Activated naive CD4-positive, alpha-beta T cell treated with anti-CD3 and anti-CD28 coated beads for 36 hours (primary cell): ENCODE measurements at regions of chr18 and their contacts with region 1.

Region 1: GRCh38 chr18:63016270-63016669 is 300.9 kb downstream of the PHLPP1 start:
- DNase-seq: peak; percentile 68
- H3K4me3 Mint-ChIP-seq: no peak overlapping the region
- H3K27ac Mint-ChIP-seq: no peak overlapping the region
- H3K4me1 Mint-ChIP-seq: no peaks in the 10 kb centered on the region
- H3K27me3 Mint-ChIP-seq: no peaks in the 10 kb centered on the region

Region 2: DNA sequence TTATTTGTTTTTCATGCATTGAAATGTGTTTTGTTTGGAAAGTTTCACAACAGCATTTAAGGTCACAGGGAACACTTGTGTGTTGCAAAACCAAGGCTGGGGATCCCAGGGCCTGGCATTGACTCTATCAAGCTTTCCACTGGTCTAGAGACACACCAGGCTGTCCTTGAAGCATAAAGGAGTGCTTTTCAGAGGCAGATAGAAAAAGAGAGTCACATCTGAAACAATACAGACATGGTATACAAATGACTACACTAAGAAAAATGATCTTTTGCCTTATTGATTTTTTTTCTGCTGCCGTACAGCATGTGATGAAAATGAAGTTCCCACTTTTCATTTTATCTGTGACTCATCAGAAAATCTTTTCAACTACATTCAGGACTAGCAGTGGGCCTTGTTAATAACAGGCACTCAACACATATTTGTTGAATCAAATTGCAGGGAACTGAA is 555.4 kb before region 1 on chr18:
- CTCF ChIA-PET with region 1: no interaction called
- intact Hi-C with region 1: no loop called
- DNase-seq: no peak
- H3K4me3 Mint-ChIP-seq: no peak overlapping the region
- H3K27ac Mint-ChIP-seq: no peak overlapping the region
- H3K4me1 Mint-ChIP-seq: no peaks in the 10 kb centered on the region
- H3K27me3 Mint-ChIP-seq: no peaks in the 10 kb centered on the region

Region 3: DNA sequence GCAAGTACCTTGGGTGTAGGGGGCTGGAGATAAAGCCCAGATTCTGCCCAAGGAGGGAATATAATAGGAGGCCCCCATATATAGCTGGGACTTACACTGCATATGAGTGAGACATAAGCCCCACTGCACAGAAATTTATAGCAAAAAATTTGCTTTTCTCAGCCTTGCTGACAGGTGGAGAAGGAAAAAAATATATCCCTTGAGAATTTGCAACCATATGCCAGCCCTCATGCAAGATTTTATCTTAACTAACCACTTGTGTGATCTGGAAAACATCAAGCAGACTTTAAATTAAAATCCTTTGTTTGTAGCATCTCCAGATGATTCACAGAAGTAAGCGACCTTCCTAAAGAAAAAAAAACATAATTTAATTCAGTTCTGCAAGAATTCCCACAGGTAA is 15.1 kb after region 1 on chr18:
- CTCF ChIA-PET with region 1: interaction called, 15 read pairs
- intact Hi-C with region 1: no loop called
- DNase-seq: no peak
- H3K4me3 Mint-ChIP-seq: no peak overlapping the region
- H3K27ac Mint-ChIP-seq: no peak overlapping the region
- H3K4me1 Mint-ChIP-seq: no peaks in the 10 kb centered on the region
- H3K27me3 Mint-ChIP-seq: no peaks in the 10 kb centered on the region

Region 4: GRCh38 chr18:63074981-63075404 is 58.7 kb after region 1 on chr18:
- CTCF ChIA-PET with region 1: interaction called, 8 read pairs
- intact Hi-C with region 1: loop called (anchors 1 kb)
- DNase-seq: peak; percentile 83
- H3K4me3 Mint-ChIP-seq: peak overlapping the region; percentile 79
- H3K27ac Mint-ChIP-seq: no peak overlapping the region
- H3K4me1 Mint-ChIP-seq: peaks cover 9% of the 10 kb centered on the region
- H3K27me3 Mint-ChIP-seq: peaks cover 2% of the 10 kb centered on the region

Region 5: DNA sequence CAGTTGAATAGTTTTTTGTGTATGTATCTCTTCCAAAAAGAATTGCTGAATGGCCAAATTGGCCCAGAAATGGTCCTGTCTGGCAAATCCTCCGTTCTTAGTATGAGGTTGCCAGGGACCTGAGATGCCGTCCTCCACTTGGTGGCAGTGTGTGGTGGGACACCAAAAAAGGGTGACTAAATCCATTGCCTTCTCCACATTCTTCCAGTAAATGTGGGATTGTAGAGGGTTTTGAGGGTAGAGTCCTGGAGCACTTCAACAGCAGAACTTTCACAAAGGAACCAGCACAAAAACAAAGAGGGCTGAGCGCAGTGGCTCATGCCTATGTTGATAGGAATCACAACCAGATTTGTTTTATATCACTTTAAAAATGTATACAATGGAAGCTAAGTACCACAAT is 103.4 kb after region 1 on chr18:
- CTCF ChIA-PET with region 1: interaction called, 7 read pairs
- intact Hi-C with region 1: loop called (anchors 1 kb)
- DNase-seq: peak; percentile 64
- H3K4me3 Mint-ChIP-seq: no peak overlapping the region
- H3K27ac Mint-ChIP-seq: no peak overlapping the region
- H3K4me1 Mint-ChIP-seq: peaks cover 2% of the 10 kb centered on the region
- H3K27me3 Mint-ChIP-seq: peaks cover 2% of the 10 kb centered on the region

Region 6: GRCh38 chr18:63131106-63131958 is 115.1 kb after region 1 on chr18:
- CTCF ChIA-PET with region 1: interaction called, 13 read pairs
- intact Hi-C with region 1: loop called (anchors 2 kb)
- DNase-seq: peak; percentile 79
- H3K4me3 Mint-ChIP-seq: no peak overlapping the region
- H3K27ac Mint-ChIP-seq: peak overlapping the region; percentile 75
- H3K4me1 Mint-ChIP-seq: peaks cover 37% of the 10 kb centered on the region
- H3K27me3 Mint-ChIP-seq: no peaks in the 10 kb centered on the region

Region 7: DNA sequence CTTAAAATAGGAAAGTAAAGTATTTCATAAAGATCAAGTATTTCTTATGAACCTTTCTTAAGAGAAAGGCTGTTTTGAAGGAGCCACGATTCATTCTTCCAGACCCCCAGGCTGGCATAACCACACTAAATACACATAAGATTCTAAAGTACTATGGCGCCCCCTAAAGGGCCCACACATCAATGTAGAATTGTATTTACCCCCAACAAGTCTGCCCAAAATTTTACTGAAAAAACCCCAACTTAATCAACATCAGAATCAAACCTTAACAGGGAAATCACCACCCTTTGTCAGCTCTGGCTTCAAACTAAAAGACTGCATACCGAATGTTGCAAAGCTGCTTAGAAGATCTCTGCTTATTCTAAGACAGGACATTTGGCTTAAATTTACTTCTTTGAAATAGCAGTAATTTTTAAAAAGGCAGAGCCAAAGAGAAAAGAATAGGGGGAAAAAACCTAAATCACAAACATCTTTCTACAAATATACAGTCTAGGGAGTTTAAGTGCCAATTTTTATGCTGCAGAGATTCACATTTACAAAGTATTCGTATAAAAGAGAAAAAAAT is 323.7 kb after region 1 on chr18:
- CTCF ChIA-PET with region 1: interaction called, 32 read pairs
- intact Hi-C with region 1: loop called (anchors 1 kb)
- DNase-seq: peak; percentile 65
- H3K4me3 Mint-ChIP-seq: no peak overlapping the region
- H3K27ac Mint-ChIP-seq: no peak overlapping the region
- H3K4me1 Mint-ChIP-seq: peaks cover 12% of the 10 kb centered on the region
- H3K27me3 Mint-ChIP-seq: no peaks in the 10 kb centered on the region

Region 8: DNA sequence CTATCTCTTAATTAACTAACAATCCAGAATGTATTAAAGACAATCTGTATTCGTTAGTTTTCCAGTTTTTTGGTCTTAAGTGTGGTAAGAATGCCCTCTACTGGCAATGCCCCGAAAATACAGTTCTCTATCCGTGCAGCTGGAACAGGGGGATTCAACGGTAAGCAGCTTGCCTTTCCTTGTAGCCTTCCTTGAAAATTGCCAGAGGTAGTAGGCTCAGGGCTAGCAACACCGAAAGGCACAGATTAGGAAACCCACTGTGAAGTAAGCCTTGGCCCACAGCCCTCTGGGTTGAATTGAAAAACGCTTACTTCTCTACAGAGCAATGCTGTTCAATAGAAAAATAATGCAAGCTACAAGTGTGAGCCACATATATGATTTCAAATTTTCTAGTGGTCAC is 423.1 kb after region 1 on chr18:
- CTCF ChIA-PET with region 1: interaction called, 77 read pairs
- intact Hi-C with region 1: loop called (anchors 1 kb)
- DNase-seq: peak; percentile 60
- H3K4me3 Mint-ChIP-seq: no peak overlapping the region
- H3K27ac Mint-ChIP-seq: no peak overlapping the region
- H3K4me1 Mint-ChIP-seq: peaks cover 2% of the 10 kb centered on the region
- H3K27me3 Mint-ChIP-seq: no peaks in the 10 kb centered on the region